ENCODE measurements at regions of chrX and their contacts with region 1.

Region 1: GRCh38 chrX:31658360-31658759 is 586.5 kb upstream of the FTHL17 start:
- DNase-seq: no peak
- H3K4me3 Mint-ChIP-seq: no peak overlapping the region
- H3K27ac Mint-ChIP-seq: no peak overlapping the region
- H3K4me1 Mint-ChIP-seq: no peaks in the 10 kb centered on the region
- H3K27me3 Mint-ChIP-seq: no peaks in the 10 kb centered on the region

Region 2: GRCh38 chrX:31213941-31214340 is 444.4 kb before region 1 on chrX:
- CTCF ChIA-PET with region 1: no interaction called
- POLR2A ChIA-PET with region 1: no interaction called
- intact Hi-C with region 1: loop called (anchors 5 kb)
- DNase-seq: peak; percentile 13
- H3K4me3 Mint-ChIP-seq: no peak overlapping the region
- H3K27ac Mint-ChIP-seq: no peak overlapping the region
- H3K4me1 Mint-ChIP-seq: no peaks in the 10 kb centered on the region
- H3K27me3 Mint-ChIP-seq: no peaks in the 10 kb centered on the region

Measured in activated CD4-positive, alpha-beta memory T cell treated with anti-CD3 and anti-CD28 coated beads for 36 hours (primary cell).